Posterior vena cava (tissue), 2 donors: ENCODE measurements at regions of chr9 and their contacts with region 1.

Region 1: GRCh38 chr9:34403554-34404380 is 27.1 kb upstream of the MYORG start:
- DNase-seq: peak; percentile 89

Region 2: GRCh38 chr9:34382879-34383278 is 20.9 kb before region 1 on chr9:
- intact Hi-C with region 1: loop called in 1 of 2 experiments (anchors 1 kb)
- DNase-seq: no peak

Region 3: GRCh38 chr9:34430843-34431437 is 27.2 kb after region 1 on chr9:
- intact Hi-C with region 1: no loop called
- DNase-seq: peak; percentile 85

Region 4: DNA sequence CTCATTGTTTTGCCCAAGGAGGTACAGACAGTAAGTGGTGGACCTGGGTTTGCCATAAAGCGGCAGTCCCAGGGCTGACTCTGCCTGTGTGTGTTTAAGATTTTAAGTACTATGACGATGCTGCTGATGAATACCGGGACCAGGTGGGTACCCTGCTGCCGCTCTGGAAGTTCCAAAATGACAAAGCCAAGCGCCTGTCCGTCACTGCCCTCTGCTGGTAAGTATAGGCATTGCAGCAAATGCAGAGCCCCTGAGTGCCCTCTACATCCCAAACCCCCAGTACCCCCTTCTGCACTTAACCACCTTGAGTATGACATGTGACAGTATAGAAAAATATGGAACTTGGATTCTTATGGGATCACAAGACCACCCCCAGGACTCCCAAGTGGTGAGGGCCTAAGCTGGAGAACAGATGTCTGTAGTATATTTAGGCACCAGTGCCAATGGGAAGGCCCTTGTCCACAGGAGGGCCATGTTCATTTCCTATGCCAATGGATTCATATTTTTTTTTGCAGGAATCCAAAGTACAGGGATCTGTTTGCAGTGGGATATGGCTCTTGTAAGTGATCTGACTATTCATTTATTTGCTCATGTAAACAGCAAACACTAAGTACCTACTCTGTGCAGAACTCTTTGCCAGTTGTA is 97.0 kb after region 1 on chr9:
- intact Hi-C with region 1: loop called (anchors 5 to 10 kb)
- DNase-seq: no peak

Region 5: GRCh38 chr9:34540828-34541227 is 137.1 kb after region 1 on chr9:
- intact Hi-C with region 1: loop called (anchors 2 to 10 kb)
- DNase-seq: no peak

Region 6: DNA sequence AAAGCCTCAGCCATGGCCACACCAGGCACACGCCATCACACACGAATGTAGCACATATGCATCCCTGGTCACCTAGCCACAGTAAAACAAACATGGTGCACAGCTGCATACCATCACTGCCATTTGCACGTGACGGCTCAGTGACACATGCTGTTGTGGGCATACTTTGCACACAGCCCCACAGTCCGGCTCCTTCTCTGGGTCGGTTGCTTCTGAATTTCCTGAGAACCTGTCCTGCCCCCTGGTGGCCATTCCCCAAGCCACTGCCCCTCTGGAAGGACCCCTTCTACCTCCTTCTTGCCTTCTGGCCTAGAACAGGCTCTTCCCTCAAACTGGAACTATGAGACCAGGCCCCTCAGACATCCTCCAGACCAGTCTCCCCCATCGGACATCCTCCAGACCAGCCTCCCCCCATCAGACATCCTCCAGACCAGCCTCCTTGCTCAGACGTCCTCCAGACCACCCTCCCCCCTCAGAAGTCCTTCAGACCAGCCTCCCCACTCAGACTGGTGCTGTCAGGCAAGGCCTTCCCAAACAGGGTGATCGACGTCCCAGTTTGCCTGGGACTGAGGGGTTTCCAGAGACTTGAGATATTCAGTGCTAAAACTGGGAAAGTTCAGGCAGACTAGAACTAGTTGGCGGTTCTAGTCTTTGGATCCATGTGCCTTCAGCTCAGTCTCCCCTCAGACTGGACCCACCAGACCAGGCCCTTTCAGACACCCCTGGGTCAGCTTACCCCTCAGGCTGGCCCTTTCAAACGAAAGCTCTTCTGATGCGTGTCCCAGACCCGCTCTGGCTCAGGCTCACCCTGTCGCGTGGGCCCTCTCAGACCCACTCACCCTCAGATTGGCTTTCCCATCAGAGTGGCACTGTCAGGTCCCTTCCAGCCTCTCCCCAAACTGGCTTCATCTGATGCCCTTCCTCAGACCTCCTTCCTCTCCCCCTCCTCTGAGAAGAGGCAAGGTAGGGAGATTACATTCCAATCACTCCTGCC is 143.4 kb after region 1 on chr9:
- intact Hi-C with region 1: loop called in 1 of 2 experiments (anchors 10 kb)
- DNase-seq: peak; percentile 89

Region 7: GRCh38 chr9:34591248-34591916 is 187.6 kb after region 1 on chr9:
- intact Hi-C with region 1: loop called (anchors 10 kb)
- DNase-seq: peak; percentile 97

Region 8: DNA sequence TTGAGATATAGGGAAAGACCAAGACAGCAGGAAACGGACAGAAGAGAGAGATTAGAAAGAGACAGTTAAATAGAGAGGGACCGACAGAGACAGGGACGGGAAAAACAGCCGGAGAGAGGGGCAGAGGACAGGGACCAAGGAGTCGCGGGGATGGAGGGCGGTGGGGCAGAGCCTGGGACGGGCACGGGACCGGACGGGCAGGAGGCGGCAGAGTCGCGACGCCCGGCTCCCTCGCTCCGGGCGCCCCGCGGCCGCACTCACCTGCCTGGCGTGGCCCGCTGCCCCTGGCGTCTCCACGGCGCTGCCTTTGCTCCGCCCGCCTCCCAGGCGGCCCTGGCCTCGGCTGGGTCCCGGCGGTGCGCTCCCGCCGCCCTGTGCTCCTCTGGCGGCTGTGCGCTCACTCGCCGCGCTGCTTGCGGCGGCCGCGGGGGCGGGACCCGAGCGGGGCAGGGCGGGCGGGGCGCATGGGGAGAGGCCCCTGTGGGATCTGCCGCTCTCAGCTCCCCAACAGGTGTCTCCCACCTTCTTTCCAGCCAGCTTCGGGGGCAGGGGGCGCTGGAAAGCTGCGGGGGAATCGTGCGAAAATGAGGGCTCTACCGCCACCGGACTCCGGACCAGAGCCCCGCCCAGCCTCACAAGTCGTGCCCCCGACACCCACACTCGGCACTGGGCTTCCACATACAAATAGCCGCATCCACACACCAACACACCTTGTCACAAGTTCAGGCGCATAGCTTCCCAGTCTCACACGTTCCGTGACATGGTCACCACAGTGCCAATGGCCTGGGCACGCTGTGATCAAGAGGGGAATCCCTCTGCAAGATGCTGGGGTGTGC is 225.1 kb after region 1 on chr9 and contains the start of gene ARID3C:
- intact Hi-C with region 1: no loop called
- DNase-seq: no peak
- total RNA-seq, gene ARID3C: not detected